Ascending aorta (tissue), 2 donors: ENCODE measurements at regions of chr3 and their contacts with region 1.

Region 1: DNA sequence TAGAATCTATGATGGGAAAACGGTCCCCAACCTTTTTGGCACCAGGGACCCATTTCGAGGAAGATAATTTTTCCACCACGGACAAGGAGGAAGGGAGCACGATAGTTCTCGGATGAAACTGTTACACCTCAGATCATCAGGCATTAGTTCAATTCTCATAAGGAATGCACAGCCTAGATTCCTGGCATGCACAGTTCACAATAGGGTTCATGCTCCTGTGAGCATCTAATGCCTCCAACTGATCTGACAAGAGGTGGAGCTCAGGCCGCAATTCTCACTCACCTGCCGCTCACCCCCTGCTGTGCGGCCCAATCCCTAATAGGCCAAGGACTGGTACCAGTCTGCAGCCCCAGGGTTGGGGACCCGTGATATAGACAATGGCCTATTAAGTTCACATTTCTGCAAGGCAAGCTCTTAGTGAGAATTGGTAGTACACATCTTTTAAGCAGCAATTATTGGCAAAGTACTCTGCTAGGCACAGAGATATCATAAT is 26.5 kb downstream of the CD200R1 start:
- DNase-seq: no peak
- H3K4me3 ChIP-seq: no peak overlapping the region
- H3K27ac ChIP-seq: no peak overlapping the region
- H3K4me1 ChIP-seq: no peaks in the 10 kb centered on the region
- H3K27me3 ChIP-seq: no peaks in the 10 kb centered on the region
- CTCF ChIP-seq: no peak

Region 2: GRCh38 chr3:112873632-112874031 is 74.8 kb before region 1 on chr3:
- intact Hi-C with region 1: loop called (anchors 10 kb)
- DNase-seq: no peak
- H3K4me3 ChIP-seq: no peak overlapping the region
- H3K27ac ChIP-seq: no peak overlapping the region
- H3K4me1 ChIP-seq: no peaks in the 10 kb centered on the region
- H3K27me3 ChIP-seq: no peaks in the 10 kb centered on the region
- CTCF ChIP-seq: no peak